ENCODE measurements at regions of chr9 and their contacts with region 1.

Region 1: DNA sequence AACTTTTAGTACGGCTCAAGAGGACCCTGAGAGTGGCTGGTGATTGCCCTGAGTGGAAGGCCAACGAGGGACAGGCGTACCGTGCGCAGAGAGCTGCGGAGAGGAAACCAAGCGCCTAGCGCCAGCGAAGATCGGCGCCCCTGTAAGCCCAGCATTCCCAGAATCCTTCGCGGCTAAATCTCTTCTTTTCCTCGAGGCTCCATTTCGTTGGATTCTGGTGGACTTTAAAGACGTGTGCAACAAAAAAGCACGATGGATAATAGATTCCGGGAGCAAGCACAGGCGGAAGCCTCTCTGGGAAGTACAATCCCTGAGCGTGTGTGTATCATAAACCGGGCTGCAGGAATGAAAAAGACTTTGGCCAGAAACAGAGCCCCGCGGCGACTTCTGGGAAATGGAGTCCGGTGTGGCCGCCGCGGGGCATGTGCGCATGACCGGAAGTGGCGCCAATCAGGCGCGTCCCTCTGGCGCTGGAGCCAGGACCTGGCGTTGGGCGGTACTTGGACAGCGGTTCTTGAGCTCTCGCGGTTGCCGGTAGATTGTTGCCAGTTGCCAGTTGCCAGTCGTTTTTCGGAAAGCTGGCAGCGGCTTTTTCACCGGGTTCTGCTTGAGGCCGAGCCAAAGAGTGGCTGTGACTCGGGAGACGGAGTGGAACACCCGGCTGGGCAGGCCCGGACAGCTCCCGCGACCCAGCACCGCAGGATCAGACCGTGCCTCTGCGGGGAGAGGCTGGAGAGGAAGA is at the start of gene ZNF79:
- DNase-seq: peak; percentile 96
- ATAC-seq: peak; percentile 81
- H3K4me3 Mint-ChIP-seq: peak within 1 kb of the TSS; percentile 99
- H3K27ac Mint-ChIP-seq: peak within 1 kb of the TSS; percentile 89
- H3K4me1 Mint-ChIP-seq: peaks cover 49% of the 10 kb centered on the region
- H3K27me3 Mint-ChIP-seq: no peaks in the 10 kb centered on the region
- total RNA-seq, gene ZNF79: 6.9 to 7.6 TPM

Region 2: GRCh38 chr9:126722252-126723078 is 701.6 kb before region 1 on chr9:
- CTCF ChIA-PET with region 1: no interaction called
- POLR2A ChIA-PET with region 1: no interaction called
- intact Hi-C with region 1: loop called in 1 of 2 experiments (anchors 5 kb)
- DNase-seq: peak; percentile 96
- ATAC-seq: peak; percentile 73
- H3K4me3 Mint-ChIP-seq: peak overlapping the region; percentile 77
- H3K27ac Mint-ChIP-seq: peak overlapping the region; percentile 89
- H3K4me1 Mint-ChIP-seq: peaks cover 43% of the 10 kb centered on the region
- H3K27me3 Mint-ChIP-seq: no peaks in the 10 kb centered on the region

Region 3: GRCh38 chr9:126985870-126986498 is 438.1 kb before region 1 on chr9:
- CTCF ChIA-PET with region 1: no interaction called
- POLR2A ChIA-PET with region 1: no interaction called
- intact Hi-C with region 1: loop called in 1 of 2 experiments (anchors 1 kb)
- DNase-seq: peak; percentile 90
- ATAC-seq: peak; percentile 83
- H3K4me3 Mint-ChIP-seq: peak overlapping the region; percentile 13
- H3K27ac Mint-ChIP-seq: no peak overlapping the region
- H3K4me1 Mint-ChIP-seq: peaks cover 45% of the 10 kb centered on the region
- H3K27me3 Mint-ChIP-seq: peaks cover 76% of the 10 kb centered on the region

Region 4: DNA sequence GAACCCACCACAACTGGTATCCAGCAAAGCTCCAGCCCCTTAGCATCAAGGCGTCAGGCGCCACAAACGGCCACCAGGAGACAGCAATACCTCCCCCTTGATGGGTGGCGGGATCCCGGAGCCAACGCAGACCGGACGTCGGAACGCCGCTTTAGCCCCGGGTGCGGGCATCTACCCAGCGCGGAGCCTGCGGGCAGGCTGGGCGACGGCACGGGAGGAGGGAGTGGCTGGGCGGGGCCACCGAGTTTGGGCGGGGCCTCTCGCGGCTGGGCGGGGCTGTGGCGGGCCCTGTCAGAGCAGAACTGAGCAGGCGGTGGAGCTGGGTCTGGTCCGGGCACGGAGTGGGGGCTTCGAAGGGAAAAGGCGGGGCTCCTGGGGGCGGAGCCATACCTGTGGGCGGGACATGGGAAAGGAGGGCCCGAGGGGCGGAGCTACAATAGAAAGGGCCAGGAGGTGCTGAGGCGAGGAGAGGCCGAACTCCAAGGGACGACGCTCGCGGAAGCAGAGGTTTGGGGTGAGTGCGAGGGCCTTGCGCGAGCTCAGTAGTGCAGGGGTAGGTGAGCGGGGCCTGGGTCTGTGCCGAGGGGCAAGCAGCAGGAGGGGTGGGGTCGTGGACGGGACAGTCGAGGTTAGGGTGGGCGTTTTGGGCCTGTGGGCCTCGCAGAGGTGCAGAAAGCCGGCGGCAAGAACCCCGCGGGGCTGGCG is 199.8 kb before region 1 on chr9:
- CTCF ChIA-PET with region 1: interaction called, 4 read pairs
- POLR2A ChIA-PET with region 1: interaction called, 5 read pairs
- intact Hi-C with region 1: loop called (anchors 1 to 10 kb)
- DNase-seq: peak; percentile 93
- ATAC-seq: peak; percentile 79
- H3K4me3 Mint-ChIP-seq: peak overlapping the region; percentile 68
- H3K27ac Mint-ChIP-seq: peak overlapping the region; percentile 16
- H3K4me1 Mint-ChIP-seq: peaks cover 24% of the 10 kb centered on the region
- H3K27me3 Mint-ChIP-seq: peaks cover 15% of the 10 kb centered on the region

Region 5: DNA sequence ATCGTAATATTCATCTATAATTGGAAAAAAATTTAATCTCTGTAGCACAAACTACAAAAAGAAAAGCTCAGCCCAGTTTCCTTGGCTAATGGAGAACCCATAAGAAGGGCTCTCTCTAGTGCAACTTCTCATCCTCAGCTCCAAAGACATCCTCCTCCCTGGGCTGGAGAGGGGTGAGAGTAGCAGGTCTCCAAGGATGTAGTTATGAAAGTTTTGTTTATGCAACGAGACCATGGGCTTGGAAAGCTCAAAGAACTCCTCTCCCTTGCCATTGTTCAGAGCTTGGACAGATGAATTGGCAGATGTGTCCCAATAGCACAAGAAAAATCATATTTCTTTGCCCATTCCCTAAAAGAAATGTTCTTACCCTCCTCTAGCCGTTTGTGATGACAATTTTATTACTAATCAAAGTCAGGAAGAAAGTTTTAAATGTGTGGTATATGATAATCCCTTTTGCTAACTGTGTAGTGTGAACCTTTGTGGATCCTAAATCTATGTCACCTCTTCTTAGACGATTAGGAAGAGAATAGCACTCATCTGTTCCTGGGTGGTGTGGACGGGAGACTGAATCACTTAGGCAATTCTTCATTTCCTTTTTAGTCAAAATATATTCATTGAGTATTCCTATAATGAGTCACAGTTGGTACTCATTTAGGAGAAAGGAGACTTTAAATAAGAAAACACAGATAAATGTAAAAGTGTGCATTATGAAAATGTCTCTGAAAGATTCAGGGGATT is 107.3 kb before region 1 on chr9:
- CTCF ChIA-PET with region 1: no interaction called
- POLR2A ChIA-PET with region 1: no interaction called
- intact Hi-C with region 1: loop called (anchors 1 to 5 kb)
- DNase-seq: peak; percentile 31
- ATAC-seq: peak; percentile 90
- H3K4me3 Mint-ChIP-seq: no peak overlapping the region
- H3K27ac Mint-ChIP-seq: no peak overlapping the region
- H3K4me1 Mint-ChIP-seq: peaks cover 14% of the 10 kb centered on the region
- H3K27me3 Mint-ChIP-seq: peaks cover 24% of the 10 kb centered on the region

Region 6: GRCh38 chr9:127358023-127358535 is 66.0 kb before region 1 on chr9:
- CTCF ChIA-PET with region 1: no interaction called
- POLR2A ChIA-PET with region 1: no interaction called
- intact Hi-C with region 1: no loop called
- DNase-seq: no peak
- ATAC-seq: no peak
- H3K4me3 Mint-ChIP-seq: no peak overlapping the region
- H3K27ac Mint-ChIP-seq: no peak overlapping the region
- H3K4me1 Mint-ChIP-seq: peaks cover 2% of the 10 kb centered on the region
- H3K27me3 Mint-ChIP-seq: peaks cover 33% of the 10 kb centered on the region

Region 7: DNA sequence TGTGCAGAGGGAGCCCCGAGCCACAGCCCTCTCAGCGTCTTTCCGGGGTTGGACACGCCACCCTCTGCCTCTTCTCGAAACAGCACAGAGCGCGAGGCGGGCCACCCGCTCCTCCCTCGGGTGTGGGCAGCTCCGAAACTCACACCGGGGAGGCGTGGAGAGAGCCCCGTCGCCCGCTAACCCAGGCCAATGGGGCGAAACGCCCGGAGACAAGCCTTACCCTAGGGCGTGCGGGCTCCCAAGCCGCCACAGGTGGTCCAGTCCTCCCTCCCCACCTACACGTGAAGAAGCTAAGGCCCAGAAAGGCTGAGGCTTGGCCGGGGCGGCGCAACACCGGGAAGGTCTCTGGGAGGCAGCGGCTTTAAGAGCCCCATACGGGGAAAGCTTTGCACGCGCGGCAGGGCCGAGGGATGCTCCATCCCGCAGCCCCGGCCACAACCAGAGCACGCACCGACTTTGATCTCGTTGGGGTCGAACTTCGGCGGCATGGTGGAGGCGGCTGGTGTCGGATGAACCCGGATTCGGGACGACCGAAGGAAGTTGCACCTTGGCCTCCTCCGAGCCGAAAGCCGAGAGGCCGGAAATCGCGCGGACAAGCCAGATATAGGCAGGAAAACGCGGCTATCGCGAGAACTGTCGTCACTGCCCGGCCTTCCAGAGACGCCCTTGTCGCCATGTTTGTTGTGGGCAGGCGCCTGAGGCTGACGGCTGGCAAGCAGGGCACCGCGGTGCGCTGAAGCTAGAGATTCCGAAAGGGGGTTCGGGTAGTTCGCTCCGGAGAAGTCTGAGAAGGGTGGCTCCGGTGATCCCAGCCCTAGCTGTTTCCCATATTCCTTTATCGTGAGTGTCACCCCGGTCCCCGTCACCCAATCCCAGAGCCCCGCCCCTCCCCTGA is 27.0 kb after region 1 on chr9 and contains the starts of genes LRSAM1 and RPL12:
- CTCF ChIA-PET with region 1: interaction called, 4 read pairs
- POLR2A ChIA-PET with region 1: interaction called, 21 read pairs
- intact Hi-C with region 1: loop called (anchors 1 kb)
- DNase-seq: peak; percentile 99
- ATAC-seq: peak; percentile 65
- H3K4me3 Mint-ChIP-seq: peak within 1 kb of the TSS; percentile 98
- H3K27ac Mint-ChIP-seq: peak within 1 kb of the TSS; percentile 98
- H3K4me1 Mint-ChIP-seq: peaks cover 36% of the 10 kb centered on the region
- H3K27me3 Mint-ChIP-seq: no peaks in the 10 kb centered on the region
- total RNA-seq, gene LRSAM1: 20.0 to 20.4 TPM
- total RNA-seq, gene RPL12: 2,222 to 2,735 TPM

Region 8: DNA sequence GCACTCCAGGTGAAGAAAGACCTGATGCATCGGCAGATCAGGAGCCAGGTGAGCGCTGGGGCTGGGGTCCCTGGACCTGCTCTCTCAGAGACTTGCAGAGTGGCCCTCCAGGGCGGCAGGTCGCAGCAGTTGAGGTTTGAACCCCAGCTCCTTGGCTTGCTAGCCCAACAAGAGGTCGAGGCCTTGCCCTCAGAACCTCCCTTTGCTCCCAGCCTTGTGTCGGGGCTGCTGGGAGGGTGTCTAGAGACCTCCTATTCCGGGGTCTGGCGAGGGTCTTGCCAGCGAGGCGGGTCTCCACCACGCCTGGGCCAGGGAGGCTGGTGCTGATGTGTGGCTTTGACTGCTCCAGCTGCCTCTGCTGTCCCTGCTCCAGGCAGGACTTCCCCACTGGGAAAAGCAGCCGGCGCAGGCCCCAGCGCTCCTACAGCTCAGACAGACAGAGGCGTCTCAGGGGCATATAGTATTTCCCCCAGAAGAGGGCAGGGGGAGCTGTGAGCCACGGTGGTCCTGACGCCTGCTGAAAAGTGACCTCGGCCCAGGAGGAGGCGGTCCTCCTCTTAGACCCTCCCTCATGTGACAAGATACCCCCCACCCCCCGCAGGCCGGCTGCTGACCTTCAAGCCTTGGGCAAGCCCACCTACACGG is 65.5 kb after region 1 on chr9:
- CTCF ChIA-PET with region 1: no interaction called
- POLR2A ChIA-PET with region 1: no interaction called
- intact Hi-C with region 1: no loop called
- DNase-seq: no peak
- ATAC-seq: no peak
- H3K4me3 Mint-ChIP-seq: no peak overlapping the region
- H3K27ac Mint-ChIP-seq: no peak overlapping the region
- H3K4me1 Mint-ChIP-seq: no peaks in the 10 kb centered on the region
- H3K27me3 Mint-ChIP-seq: no peaks in the 10 kb centered on the region

Region 9: DNA sequence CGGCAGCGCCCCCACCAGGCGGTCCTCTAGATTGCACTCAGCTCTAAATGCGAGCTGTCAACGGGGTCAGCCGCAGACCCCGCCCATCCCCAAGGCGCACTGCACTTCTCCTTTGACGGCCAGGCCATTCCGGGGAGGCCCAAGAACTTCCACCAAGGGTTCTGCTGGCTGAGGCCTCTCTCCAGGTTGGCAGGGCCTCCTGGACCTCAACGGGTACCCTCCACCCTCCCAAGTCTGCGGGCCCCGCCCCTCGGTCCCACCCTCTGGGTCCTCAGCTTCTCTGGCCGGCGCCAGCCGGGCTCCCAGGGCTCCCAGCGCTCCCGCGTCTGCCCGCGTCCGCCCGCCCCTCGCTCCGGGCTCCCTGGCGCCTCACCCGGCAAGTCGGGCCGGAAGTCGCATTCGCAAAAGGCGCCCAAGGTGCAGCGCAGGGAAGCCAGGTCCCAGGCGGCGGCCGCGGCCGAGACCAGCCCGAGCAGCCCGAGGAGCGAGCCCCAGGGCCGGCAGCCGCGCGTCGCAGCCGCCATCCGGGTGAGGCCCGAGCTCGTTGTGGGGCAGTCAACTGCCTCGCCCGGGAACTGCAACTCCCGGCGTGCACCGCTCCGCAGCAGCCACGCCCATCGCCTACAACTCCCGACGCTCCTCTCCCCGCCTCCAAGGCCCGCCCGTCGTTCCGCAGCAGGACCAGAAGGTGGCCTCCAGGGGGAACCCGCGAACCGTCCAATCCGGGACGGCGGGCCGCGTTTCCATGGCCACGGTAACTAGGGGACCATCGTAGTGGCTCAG is 310.8 kb after region 1 on chr9 and contains the start of gene TOR2A:
- CTCF ChIA-PET with region 1: no interaction called
- POLR2A ChIA-PET with region 1: no interaction called
- intact Hi-C with region 1: loop called in 1 of 2 experiments (anchors 1 kb)
- DNase-seq: peak; percentile 99
- ATAC-seq: peak; percentile 93
- H3K4me3 Mint-ChIP-seq: peak within 1 kb of the TSS; percentile 72
- H3K27ac Mint-ChIP-seq: peak within 1 kb of the TSS; percentile 73
- H3K4me1 Mint-ChIP-seq: peaks cover 12% of the 10 kb centered on the region
- H3K27me3 Mint-ChIP-seq: no peaks in the 10 kb centered on the region
- total RNA-seq, gene TOR2A: 11.3 to 14.0 TPM

Measured in activated CD4-positive, alpha-beta T cell treated with anti-CD3 and anti-CD28 coated beads for 36 hours (primary cell).